ENCODE measurements at regions of chr12 and their contacts with region 1.

Region 1: DNA sequence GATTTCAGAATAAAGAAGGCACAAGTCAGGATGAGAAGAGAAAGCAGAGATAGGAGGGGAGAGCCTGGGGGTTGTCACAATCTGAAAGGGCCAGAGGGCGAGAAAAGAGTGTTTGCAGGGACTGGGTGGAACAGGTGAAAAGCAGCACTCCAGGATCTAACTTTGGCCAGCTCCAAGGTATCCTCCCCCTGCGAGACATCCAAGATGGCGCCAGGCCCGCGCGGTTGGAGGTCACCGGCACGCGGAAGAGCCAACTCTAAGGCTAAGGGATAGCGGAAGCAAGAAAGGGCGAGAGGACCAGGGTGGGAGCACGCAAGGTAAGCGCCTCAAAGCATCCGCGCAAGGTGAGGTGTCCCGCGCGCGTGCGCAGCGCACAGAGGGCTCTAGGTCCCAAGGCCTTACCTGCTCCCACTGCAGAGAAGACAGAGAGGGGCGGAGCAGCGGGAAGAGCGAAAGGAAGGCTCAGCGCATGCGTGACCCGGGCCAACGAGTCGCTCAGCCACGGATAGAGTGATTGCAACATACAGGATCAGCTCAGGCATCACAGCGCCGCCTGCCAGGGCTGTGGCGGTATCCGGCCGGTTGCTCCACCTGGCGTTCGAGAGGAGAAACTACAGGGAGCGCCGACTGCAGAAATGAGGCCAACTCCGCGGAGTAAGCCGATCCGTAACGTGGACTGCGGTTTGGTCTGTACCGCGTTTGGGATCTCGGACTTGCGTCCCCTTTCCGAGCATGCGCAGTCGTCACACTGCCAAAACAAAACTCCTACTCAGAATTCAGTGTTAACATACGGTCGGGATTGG is at the start of gene ATP5MC2:
- DNase-seq: peak; percentile 93 to 97
- H3K4me3 ChIP-seq: peak within 1 kb of the TSS; percentile 86
- H3K27ac ChIP-seq: peak within 1 kb of the TSS; percentile 75
- H3K4me1 ChIP-seq: peaks cover 15% of the 10 kb centered on the region
- H3K27me3 ChIP-seq: no peaks in the 10 kb centered on the region
- CTCF ChIP-seq: peak; percentile 92
- total RNA-seq, gene ATP5MC2: 270 and 280 TPM in 2 replicates

Region 2: DNA sequence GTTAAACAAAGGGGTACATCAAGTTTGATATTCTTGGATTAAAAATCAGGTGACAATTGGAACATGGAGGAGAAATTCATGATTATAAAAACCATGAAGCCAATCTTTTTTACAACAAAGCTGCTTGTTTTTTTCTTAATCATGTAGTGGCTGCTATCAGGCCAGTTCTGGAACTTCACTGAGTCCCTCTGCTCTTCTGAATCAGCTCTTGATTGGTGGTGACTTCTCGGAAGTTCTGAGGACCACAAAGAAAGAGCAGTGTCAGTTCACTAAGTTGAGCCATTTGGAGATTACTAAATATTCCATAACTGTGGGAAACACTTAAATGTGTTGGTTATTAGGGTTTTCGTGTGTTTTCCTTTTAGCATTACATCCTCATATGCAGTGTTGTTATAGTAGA is 661.1 kb before region 1 on chr12:
- CTCF ChIA-PET with region 1: no interaction called
- POLR2A ChIA-PET with region 1: interaction called, 15 read pairs
- intact Hi-C with region 1: no loop called
- DNase-seq: no peak
- H3K4me3 ChIP-seq: no peak overlapping the region
- H3K27ac ChIP-seq: no peak overlapping the region
- H3K4me1 ChIP-seq: peaks cover 22% of the 10 kb centered on the region
- H3K27me3 ChIP-seq: no peaks in the 10 kb centered on the region
- CTCF ChIP-seq: no peak

Region 3: DNA sequence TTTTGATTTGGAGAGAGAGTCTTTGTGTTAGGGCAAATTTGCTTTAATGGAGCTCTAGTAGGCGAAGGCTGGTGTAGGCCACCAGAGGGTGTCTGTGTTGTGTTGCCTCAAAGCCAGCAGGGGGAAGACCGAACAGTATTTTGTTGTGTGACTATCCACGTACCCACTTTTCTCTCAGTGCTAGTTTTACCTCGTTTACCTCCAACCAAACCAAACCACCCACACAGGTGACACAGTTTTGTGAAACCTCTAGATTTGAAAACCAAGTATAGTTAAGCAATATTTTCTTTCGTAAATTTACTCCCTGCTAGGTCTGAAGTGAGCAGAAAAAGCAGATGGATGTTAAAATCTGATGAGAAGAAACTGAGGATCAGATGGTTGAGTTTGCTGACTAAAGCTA is 132.3 kb before region 1 on chr12:
- CTCF ChIA-PET with region 1: interaction called, 6 read pairs
- POLR2A ChIA-PET with region 1: no interaction called
- intact Hi-C with region 1: loop called (anchors 1 kb)
- DNase-seq: peak in 1 of 2 experiments; percentile 19
- H3K4me3 ChIP-seq: no peak overlapping the region
- H3K27ac ChIP-seq: 0 out of 2 replicates have a peak overlapping the region, but pooled peaks have one; percentile 4
- H3K4me1 ChIP-seq: peaks cover 16% of the 10 kb centered on the region
- H3K27me3 ChIP-seq: no peaks in the 10 kb centered on the region
- CTCF ChIP-seq: peak; percentile 76

Region 4: GRCh38 chr12:53625946-53626701 is 49.7 kb before region 1 on chr12 and contains the start of gene ATF7:
- CTCF ChIA-PET with region 1: interaction called, 4 read pairs
- POLR2A ChIA-PET with region 1: interaction called, 6 read pairs
- intact Hi-C with region 1: loop called (anchors 1 kb)
- DNase-seq: peak; percentile 90 to 98
- H3K4me3 ChIP-seq: peak within 1 kb of the TSS; percentile 82
- H3K27ac ChIP-seq: peak within 1 kb of the TSS; percentile 72
- H3K4me1 ChIP-seq: peaks cover 29% of the 10 kb centered on the region
- H3K27me3 ChIP-seq: no peaks in the 10 kb centered on the region
- CTCF ChIP-seq: no peak
- total RNA-seq, gene ATF7: 16.3 and 24.7 TPM in 2 replicates

Region 5: GRCh38 chr12:53701518-53702260 is 25.8 kb after region 1 on chr12:
- CTCF ChIA-PET with region 1: no interaction called
- POLR2A ChIA-PET with region 1: no interaction called
- intact Hi-C with region 1: no loop called
- DNase-seq: peak in 1 of 2 experiments; percentile 79
- H3K4me3 ChIP-seq: no peak overlapping the region
- H3K27ac ChIP-seq: no peak overlapping the region
- H3K4me1 ChIP-seq: peaks cover 3% of the 10 kb centered on the region; the same call in 1 of the 2 replicates
- H3K27me3 ChIP-seq: peaks cover 22% of the 10 kb centered on the region
- CTCF ChIP-seq: peak; percentile 82

Measured in PC-9 (cell line).